Aorta (tissue), 5 donors: ENCODE measurements at regions of chr3 and their contacts with region 1.

Region 1: GRCh38 chr3:64685800-64686445 is 1.9 kb downstream of the ADAMTS9 start:
- DNase-seq: peak; percentile 93 to 96
- ATAC-seq: peak; percentile 93
- H3K4me3 ChIP-seq: peak overlapping the region; percentile 76 to 88
- H3K27ac ChIP-seq: peak overlapping the region; percentile 84 to 97
- H3K4me1 ChIP-seq: peaks cover 0 to 13% of the 10 kb centered on the region in 2 donors
- H3K27me3 ChIP-seq: no peaks in the 10 kb centered on the region

Region 2: GRCh38 chr3:64345371-64345770 is 340.6 kb before region 1 on chr3:
- intact Hi-C with region 1: no loop called
- DNase-seq: no peak
- ATAC-seq: peak; percentile 65
- H3K4me3 ChIP-seq: no peak overlapping the region
- H3K27ac ChIP-seq: no peak overlapping the region
- H3K4me1 ChIP-seq: no peaks in the 10 kb centered on the region
- H3K27me3 ChIP-seq: no peaks in the 10 kb centered on the region

Region 3: GRCh38 chr3:64533617-64534317 is 152.2 kb before region 1 on chr3:
- intact Hi-C with region 1: loop called in 1 of 2 experiments (anchors 2 kb)
- DNase-seq: peak; percentile 82 to 92
- ATAC-seq: peak; percentile 93
- H3K4me3 ChIP-seq: peak overlapping the region in 1 of 2 donors; percentile 8
- H3K27ac ChIP-seq: no peak overlapping the region
- H3K4me1 ChIP-seq: no peaks in the 10 kb centered on the region
- H3K27me3 ChIP-seq: no peaks in the 10 kb centered on the region

Region 4: DNA sequence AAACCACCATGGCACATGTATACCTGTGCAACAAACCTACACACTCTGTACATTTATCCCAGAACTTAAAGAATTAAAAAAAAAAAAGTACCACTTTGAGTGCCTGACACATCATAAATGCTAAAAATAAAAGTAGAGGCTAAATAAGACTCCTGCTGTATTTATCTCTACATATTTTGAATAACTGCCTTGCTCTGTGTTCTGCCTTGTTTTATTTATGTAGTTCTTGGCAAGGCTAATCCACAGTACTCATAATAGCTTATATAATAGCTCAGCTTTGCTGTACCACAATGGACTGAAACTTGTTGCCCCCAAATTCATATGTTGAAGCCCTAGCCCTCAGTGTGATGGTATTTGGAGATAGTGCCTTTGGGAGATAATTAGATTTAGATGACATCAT is 97.3 kb after region 1 on chr3:
- intact Hi-C with region 1: loop called in 1 of 2 experiments (anchors 5 kb)
- DNase-seq: no peak
- ATAC-seq: peak; percentile 60
- H3K4me3 ChIP-seq: no peak overlapping the region
- H3K27ac ChIP-seq: peak overlapping the region in 1 of 2 donors; percentile 13
- H3K4me1 ChIP-seq: peaks cover 0 to 2% of the 10 kb centered on the region in 2 donors
- H3K27me3 ChIP-seq: no peaks in the 10 kb centered on the region

Region 5: DNA sequence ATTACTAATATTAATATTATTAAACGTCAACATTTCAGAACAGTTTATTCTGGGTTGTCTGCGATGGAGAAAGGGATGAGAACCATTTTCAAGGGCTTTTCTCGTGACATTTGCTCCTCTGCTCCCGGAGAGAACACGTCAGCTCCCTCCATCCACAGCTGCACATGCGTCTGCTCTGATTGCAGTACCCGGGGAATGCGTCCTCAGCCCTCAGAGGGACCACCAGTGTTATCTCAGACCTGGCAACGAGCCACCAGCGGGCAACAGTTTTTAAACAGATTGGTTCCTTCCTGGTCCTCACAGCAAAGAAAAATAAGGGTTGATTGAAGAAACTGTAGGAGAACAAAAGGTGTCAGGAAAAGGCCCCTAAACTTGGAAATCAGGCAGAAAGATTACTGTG is 204.1 kb after region 1 on chr3:
- intact Hi-C with region 1: loop called (anchors 10 kb)
- DNase-seq: peak; percentile 50 to 81
- ATAC-seq: no peak
- H3K4me3 ChIP-seq: no peak overlapping the region
- H3K27ac ChIP-seq: peak overlapping the region in 1 of 2 donors; percentile 48
- H3K4me1 ChIP-seq: peaks cover under 1 to 4% of the 10 kb centered on the region in 2 donors
- H3K27me3 ChIP-seq: no peaks in the 10 kb centered on the region

Region 6: DNA sequence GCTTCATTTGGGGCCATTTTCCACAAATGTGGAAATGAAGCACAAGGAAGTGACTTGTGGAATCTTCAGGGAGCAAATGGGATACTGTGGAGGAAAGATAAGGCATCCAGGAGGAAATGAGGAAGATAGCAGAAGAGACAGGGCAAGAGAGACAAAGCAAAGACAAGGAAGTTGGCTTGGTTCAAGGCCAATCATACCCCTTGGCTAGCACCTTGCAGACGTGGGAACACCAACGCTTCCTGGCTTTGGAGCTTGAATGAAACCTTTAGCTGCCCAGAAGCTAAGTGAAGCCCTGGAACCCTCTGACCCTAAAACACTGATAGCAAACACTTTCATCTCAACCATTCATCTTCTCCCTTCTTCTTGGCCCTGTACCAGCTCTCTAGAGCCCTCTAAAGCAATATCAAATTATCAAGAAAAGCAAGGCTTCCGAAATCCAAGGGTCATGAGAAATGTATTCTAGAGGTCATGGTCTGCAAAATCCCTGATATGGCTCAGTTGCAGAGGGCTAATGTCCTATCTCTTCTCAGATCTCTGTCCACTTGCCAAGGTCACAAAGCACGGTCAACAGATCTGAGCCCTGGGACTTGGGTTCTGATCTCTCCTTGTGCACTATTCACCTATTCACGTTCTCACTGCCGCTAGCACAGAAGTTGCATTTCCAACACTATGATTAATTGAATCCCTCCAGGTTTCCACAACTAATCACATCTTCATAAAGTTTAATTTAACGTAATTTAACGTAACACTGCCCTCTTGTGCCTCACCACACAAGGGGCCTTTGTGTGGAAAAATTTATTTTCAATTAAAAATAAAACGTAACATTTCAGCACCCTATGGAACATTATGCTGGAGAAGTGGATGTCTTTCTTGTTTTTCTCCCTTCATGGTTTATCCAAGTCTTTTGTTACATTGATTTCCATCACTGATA is 559.5 kb after region 1 on chr3:
- intact Hi-C with region 1: loop called in 1 of 2 experiments (anchors 10 kb)
- DNase-seq: no peak
- ATAC-seq: peak; percentile 21
- H3K4me3 ChIP-seq: no peak overlapping the region
- H3K27ac ChIP-seq: no peak overlapping the region
- H3K4me1 ChIP-seq: no peaks in the 10 kb centered on the region
- H3K27me3 ChIP-seq: no peaks in the 10 kb centered on the region